ENCODE measurements at regions of chr18 and their contacts with region 1.

Region 1: DNA sequence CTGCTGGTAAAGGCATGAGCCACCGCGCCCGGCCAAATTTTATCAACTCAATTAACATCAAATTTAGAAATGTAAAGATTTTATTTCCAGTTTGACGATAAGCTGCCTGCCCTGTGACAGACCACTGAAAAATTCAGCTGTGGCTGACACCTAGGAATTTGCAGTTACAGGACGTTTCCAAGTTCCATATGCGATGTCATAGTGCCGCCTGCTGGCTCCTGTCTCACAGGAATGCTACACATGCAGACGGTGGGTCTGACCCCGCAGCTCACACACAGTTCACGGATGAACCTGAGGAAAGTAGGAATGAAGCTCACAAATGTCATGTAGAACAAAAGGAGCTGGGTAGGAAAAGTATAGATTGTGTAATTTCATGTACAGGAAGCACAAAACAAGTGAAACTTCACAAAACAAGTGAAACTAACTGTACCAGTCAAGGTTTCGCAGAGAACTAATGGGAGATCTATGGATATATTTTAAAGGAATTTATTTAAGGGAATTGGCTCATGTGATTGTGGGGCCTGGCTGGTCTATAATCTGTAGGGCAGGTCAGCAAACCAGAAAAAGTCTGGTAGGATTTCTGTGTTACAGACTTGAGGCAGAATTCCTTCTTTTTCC is 13.2 kb upstream of the SEH1L start:
- DNase-seq: peak; percentile 84 to 85
- H3K4me3 ChIP-seq: no peak overlapping the region
- H3K27ac ChIP-seq: no peak overlapping the region
- H3K4me1 ChIP-seq: no peaks in the 10 kb centered on the region
- H3K27me3 ChIP-seq: no peaks in the 10 kb centered on the region
- CTCF ChIP-seq: peak; percentile 84 to 95

Region 2: GRCh38 chr18:12726774-12727550 is 207.6 kb before region 1 on chr18:
- intact Hi-C with region 1: loop called (anchors 2 kb)
- DNase-seq: peak in 1 of 2 donors; percentile 46
- H3K4me3 ChIP-seq: no peak overlapping the region
- H3K27ac ChIP-seq: no peak overlapping the region
- H3K4me1 ChIP-seq: no peaks in the 10 kb centered on the region
- H3K27me3 ChIP-seq: no peaks in the 10 kb centered on the region
- CTCF ChIP-seq: peak; percentile 87 to 92

Region 3: DNA sequence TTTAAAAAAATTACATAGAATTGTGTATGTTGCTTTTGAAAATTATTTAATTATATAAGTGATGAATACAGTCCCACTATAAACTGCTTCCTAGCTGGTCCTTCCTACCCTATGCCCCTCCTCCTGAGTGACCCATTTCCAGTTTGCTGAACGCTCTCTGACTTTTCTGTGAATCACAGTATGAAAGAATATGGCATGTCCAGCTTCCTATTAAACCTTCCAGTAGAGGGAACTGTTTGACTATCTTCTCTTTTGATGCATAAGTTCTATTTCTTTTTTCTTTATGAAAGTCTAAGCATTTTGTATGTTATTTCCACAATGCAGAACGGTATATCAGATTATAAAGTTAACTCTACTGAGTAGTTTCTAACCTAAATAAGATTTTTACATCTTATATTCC is 190.5 kb before region 1 on chr18:
- intact Hi-C with region 1: loop called (anchors 5 kb)
- DNase-seq: no peak
- H3K4me3 ChIP-seq: no peak overlapping the region
- H3K27ac ChIP-seq: no peak overlapping the region
- H3K4me1 ChIP-seq: no peaks in the 10 kb centered on the region
- H3K27me3 ChIP-seq: no peaks in the 10 kb centered on the region
- CTCF ChIP-seq: peak; percentile 39 to 66

Region 4: GRCh38 chr18:13086906-13087305 is 152.3 kb after region 1 on chr18:
- intact Hi-C with region 1: no loop called
- DNase-seq: no peak
- H3K4me3 ChIP-seq: no peak overlapping the region
- H3K27ac ChIP-seq: no peak overlapping the region
- H3K4me1 ChIP-seq: no peaks in the 10 kb centered on the region
- H3K27me3 ChIP-seq: no peaks in the 10 kb centered on the region
- CTCF ChIP-seq: no peak

Measured in tibial artery (tissue), 4 donors.